Ascending aorta (tissue), 2 donors: ENCODE measurements at regions of chr9 and their contacts with region 1.

Region 1: GRCh38 chr9:94799578-94800264 is 73.2 kb downstream of the AOPEP start:
- DNase-seq: peak in 1 of 2 donors; percentile 80
- H3K4me3 ChIP-seq: peak overlapping the region; percentile 24 to 53
- H3K27ac ChIP-seq: peak overlapping the region; percentile 94 to 96
- H3K4me1 ChIP-seq: peaks cover 11 to 56% of the 10 kb centered on the region in 2 donors
- H3K27me3 ChIP-seq: no peaks in the 10 kb centered on the region
- CTCF ChIP-seq: no peak

Region 2: GRCh38 chr9:94783102-94783664 is 16.5 kb before region 1 on chr9:
- intact Hi-C with region 1: loop called (anchors 2 kb)
- DNase-seq: peak in 1 of 2 donors; percentile 91
- H3K4me3 ChIP-seq: no peak overlapping the region
- H3K27ac ChIP-seq: peak overlapping the region; percentile 83 to 84
- H3K4me1 ChIP-seq: peaks cover 0 to 34% of the 10 kb centered on the region in 2 donors
- H3K27me3 ChIP-seq: no peaks in the 10 kb centered on the region
- CTCF ChIP-seq: peak; percentile 64 to 69 (median 68)

Region 3: GRCh38 chr9:94867281-94867841 is 67.6 kb after region 1 on chr9:
- intact Hi-C with region 1: loop called (anchors 2 kb)
- DNase-seq: peak; percentile 39 to 85
- H3K4me3 ChIP-seq: peak overlapping the region; percentile 2 to 31
- H3K27ac ChIP-seq: peak overlapping the region; percentile 80 to 83
- H3K4me1 ChIP-seq: peaks cover 13 to 54% of the 10 kb centered on the region in 2 donors
- H3K27me3 ChIP-seq: no peaks in the 10 kb centered on the region
- CTCF ChIP-seq: no peak